Adrenal gland (tissue), 19 donors: ENCODE measurements at regions of chr13 and their contacts with region 1.

Region 1: GRCh38 chr13:98565726-98566565 is 11.0 kb downstream of the STK24 start:
- DNase-seq: peak in 5 of 7 donors; percentile 44 to 65 (median 62)
- H3K4me3 ChIP-seq: peak overlapping the region in 1 of 4 donors; percentile 29
- H3K27ac ChIP-seq: peak overlapping the region in 4 of 5 donors; percentile 22 to 82 (median 58)
- H3K4me1 ChIP-seq: peaks cover 14 to 66% of the 10 kb centered on the region in 2 donors
- H3K27me3 ChIP-seq: no peaks in the 10 kb centered on the region
- CTCF ChIP-seq: peak in 1 of 6 experiments; percentile 23
- POLR2A ChIP-seq: no peak

Region 2: DNA sequence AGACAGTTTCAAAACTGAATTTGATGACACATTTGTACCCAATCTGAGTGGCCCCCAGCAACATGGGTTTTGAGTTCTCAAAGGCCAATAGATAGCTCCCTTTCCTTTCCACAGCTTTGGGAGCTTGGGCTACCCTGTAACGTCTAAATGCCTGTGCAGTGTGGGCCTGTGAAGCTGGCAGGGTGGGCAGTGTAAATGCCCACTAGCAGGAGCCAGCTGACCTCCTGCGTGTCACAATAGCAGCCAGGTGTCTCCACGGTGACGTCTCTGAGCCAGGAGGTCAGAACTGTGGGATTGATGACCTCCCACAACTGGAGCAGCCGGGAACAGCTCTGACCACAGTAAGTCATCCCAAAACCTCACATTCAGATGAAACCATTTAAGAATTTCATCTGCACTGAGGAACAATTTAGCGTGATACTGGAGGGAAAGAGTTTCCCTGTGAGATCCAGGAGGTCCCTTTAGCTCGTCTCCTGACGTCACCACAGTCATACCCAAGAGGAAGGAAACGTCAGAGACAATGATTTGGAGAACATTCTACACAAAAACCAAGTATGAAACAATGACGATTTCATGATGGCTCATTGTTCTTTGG is 612.5 kb before region 1 on chr13 and contains the start of gene IPO5:
- intact Hi-C with region 1: no loop called
- DNase-seq: no peak
- H3K4me3 ChIP-seq: no peak within 1 kb of the TSS
- H3K27ac ChIP-seq: no peak within 1 kb of the TSS
- H3K4me1 ChIP-seq: no peaks in the 10 kb centered on the region
- H3K27me3 ChIP-seq: no peaks in the 10 kb centered on the region
- CTCF ChIP-seq: no peak
- POLR2A ChIP-seq: no peak
- total RNA-seq, gene IPO5: 56.3 to 87.2 (median 74.6) TPM

Region 3: GRCh38 chr13:98484289-98485219 is 81.4 kb before region 1 on chr13:
- intact Hi-C with region 1: loop called (anchors 10 kb)
- DNase-seq: peak; percentile 79 to 97 (median 94)
- H3K4me3 ChIP-seq: no peak overlapping the region
- H3K27ac ChIP-seq: peak overlapping the region; percentile 31 to 87 (median 71)
- H3K4me1 ChIP-seq: peaks cover 34 to 56% of the 10 kb centered on the region in 2 donors
- H3K27me3 ChIP-seq: no peaks in the 10 kb centered on the region
- CTCF ChIP-seq: no peak
- POLR2A ChIP-seq: peak in 1 of 2 donors; percentile 60

Region 4: GRCh38 chr13:98910501-98910951 is 344.6 kb after region 1 on chr13:
- intact Hi-C with region 1: no loop called
- DNase-seq: peak in 5 of 7 donors; percentile 16 to 58 (median 27)
- H3K4me3 ChIP-seq: no peak overlapping the region
- H3K27ac ChIP-seq: peak overlapping the region in 2 of 5 donors; percentile 34 to 73
- H3K4me1 ChIP-seq: peaks cover 0 to 16% of the 10 kb centered on the region in 2 donors
- H3K27me3 ChIP-seq: no peaks in the 10 kb centered on the region
- CTCF ChIP-seq: no peak
- POLR2A ChIP-seq: no peak